CD8-positive, alpha-beta T cell (primary cell): ENCODE measurements at regions of chr1 and their contacts with region 1.

Region 1: GRCh38 chr1:155859234-155859829 is at the start of gene SYT11:
- DNase-seq: peak; percentile 79 to 97 (median 93)
- ATAC-seq: peak; percentile 85
- H3K4me3 ChIP-seq: peak within 1 kb of the TSS; percentile 61 to 64
- H3K4me3 Mint-ChIP-seq: peak within 1 kb of the TSS; percentile 83
- H3K27ac ChIP-seq: peak within 1 kb of the TSS; percentile 45 to 96
- H3K27ac Mint-ChIP-seq: peak within 1 kb of the TSS; percentile 90
- H3K4me1 ChIP-seq: peaks cover 37% of the 10 kb centered on the region
- H3K4me1 Mint-ChIP-seq: peaks cover 44% of the 10 kb centered on the region
- H3K27me3 ChIP-seq: no peaks in the 10 kb centered on the region
- H3K27me3 Mint-ChIP-seq: peaks cover 5% of the 10 kb centered on the region
- CTCF ChIP-seq: no peak
- total RNA-seq, gene SYT11: 6.9 to 8.6 TPM

Region 2: GRCh38 chr1:155261852-155262673 is 597.3 kb before region 1 on chr1 and contains the start of gene SCAMP3:
- CTCF ChIA-PET with region 1: no interaction called
- POLR2A ChIA-PET with region 1: no interaction called
- intact Hi-C with region 1: loop called in 1 of 2 experiments (anchors 5 kb)
- DNase-seq: peak; percentile 61 to 96 (median 84)
- ATAC-seq: peak; percentile 95
- H3K4me3 ChIP-seq: peak within 1 kb of the TSS; percentile 79 to 86
- H3K4me3 Mint-ChIP-seq: peak within 1 kb of the TSS; percentile 100
- H3K27ac ChIP-seq: peak within 1 kb of the TSS; percentile 72 to 85
- H3K27ac Mint-ChIP-seq: peak within 1 kb of the TSS; percentile 97
- H3K4me1 ChIP-seq: peaks cover 16% of the 10 kb centered on the region
- H3K4me1 Mint-ChIP-seq: peaks cover 29% of the 10 kb centered on the region
- H3K27me3 ChIP-seq: no peaks in the 10 kb centered on the region
- H3K27me3 Mint-ChIP-seq: no peaks in the 10 kb centered on the region
- CTCF ChIP-seq: no peak
- total RNA-seq, gene SCAMP3: 47.5 to 48.5 TPM

Region 3: GRCh38 chr1:155688324-155689080 is 170.8 kb before region 1 on chr1 and contains the start of gene YY1AP1:
- CTCF ChIA-PET with region 1: no interaction called
- POLR2A ChIA-PET with region 1: no interaction called
- intact Hi-C with region 1: loop called in 1 of 2 experiments (anchors 2 kb)
- DNase-seq: peak; percentile 82 to 95 (median 91)
- ATAC-seq: peak; percentile 86
- H3K4me3 ChIP-seq: peak within 1 kb of the TSS; percentile 91 to 97
- H3K4me3 Mint-ChIP-seq: peak within 1 kb of the TSS; percentile 96
- H3K27ac ChIP-seq: peak within 1 kb of the TSS; percentile 92 to 96
- H3K27ac Mint-ChIP-seq: peak within 1 kb of the TSS; percentile 97
- H3K4me1 ChIP-seq: peaks cover 46% of the 10 kb centered on the region
- H3K4me1 Mint-ChIP-seq: peaks cover 68% of the 10 kb centered on the region
- H3K27me3 ChIP-seq: no peaks in the 10 kb centered on the region
- H3K27me3 Mint-ChIP-seq: no peaks in the 10 kb centered on the region
- CTCF ChIP-seq: no peak
- total RNA-seq, gene YY1AP1: 122 to 138 TPM

Region 4: DNA sequence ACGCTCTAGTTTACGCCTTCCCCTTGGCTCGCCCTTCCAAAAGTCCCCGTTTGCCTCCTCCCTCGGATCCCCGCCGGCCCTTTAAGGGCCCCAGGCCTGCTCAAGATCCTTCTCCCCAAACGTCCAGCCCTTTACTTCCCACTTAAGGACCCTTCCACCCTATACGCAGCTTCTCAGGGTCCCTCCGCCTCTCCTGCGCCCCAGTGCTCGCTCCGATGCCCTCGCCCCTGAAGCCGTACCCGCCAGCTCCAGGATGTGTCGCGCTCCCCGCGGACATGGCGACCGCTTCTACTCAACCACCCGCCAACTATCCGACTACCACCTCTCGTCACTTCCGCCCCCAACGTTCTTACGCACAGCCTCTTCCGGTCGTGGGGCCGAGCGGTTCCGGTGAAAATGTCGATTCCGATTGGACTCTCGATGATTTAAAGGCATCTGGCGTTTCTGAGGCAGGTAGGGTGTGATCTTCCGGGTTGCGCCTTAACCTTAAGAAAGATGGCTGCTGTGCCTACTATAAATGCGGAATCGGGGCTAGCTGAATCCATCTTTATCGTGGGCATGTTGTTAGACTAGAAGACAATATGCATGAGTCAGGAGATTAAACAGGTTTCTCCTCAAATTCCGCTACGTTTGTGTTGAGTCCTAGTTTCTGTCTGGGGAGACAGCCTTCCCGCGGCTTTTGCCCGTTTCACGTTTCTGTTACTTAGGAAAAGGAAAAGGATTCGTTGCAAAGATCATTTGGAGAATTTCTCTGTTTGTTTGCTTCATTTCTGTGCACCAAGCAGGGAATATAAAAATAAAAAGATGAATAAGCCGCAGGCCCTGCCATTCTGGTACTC is 75.0 kb after region 1 on chr1 and contains the start of gene KHDC4:
- CTCF ChIA-PET with region 1: no interaction called
- POLR2A ChIA-PET with region 1: interaction called, 5 read pairs
- intact Hi-C with region 1: loop called (anchors 1 kb)
- DNase-seq: peak; percentile 88 to 100 (median 93)
- ATAC-seq: peak; percentile 92
- H3K4me3 ChIP-seq: peak within 1 kb of the TSS; percentile 83 to 96
- H3K4me3 Mint-ChIP-seq: no peak within 1 kb of the TSS
- H3K27ac ChIP-seq: peak within 1 kb of the TSS; percentile 89 to 98
- H3K27ac Mint-ChIP-seq: no peak within 1 kb of the TSS
- H3K4me1 ChIP-seq: peaks cover 39% of the 10 kb centered on the region
- H3K4me1 Mint-ChIP-seq: peaks cover 34% of the 10 kb centered on the region
- H3K27me3 ChIP-seq: no peaks in the 10 kb centered on the region
- H3K27me3 Mint-ChIP-seq: no peaks in the 10 kb centered on the region
- CTCF ChIP-seq: peak; percentile 32
- total RNA-seq, gene KHDC4: 47.4 to 54.6 TPM

Region 5: DNA sequence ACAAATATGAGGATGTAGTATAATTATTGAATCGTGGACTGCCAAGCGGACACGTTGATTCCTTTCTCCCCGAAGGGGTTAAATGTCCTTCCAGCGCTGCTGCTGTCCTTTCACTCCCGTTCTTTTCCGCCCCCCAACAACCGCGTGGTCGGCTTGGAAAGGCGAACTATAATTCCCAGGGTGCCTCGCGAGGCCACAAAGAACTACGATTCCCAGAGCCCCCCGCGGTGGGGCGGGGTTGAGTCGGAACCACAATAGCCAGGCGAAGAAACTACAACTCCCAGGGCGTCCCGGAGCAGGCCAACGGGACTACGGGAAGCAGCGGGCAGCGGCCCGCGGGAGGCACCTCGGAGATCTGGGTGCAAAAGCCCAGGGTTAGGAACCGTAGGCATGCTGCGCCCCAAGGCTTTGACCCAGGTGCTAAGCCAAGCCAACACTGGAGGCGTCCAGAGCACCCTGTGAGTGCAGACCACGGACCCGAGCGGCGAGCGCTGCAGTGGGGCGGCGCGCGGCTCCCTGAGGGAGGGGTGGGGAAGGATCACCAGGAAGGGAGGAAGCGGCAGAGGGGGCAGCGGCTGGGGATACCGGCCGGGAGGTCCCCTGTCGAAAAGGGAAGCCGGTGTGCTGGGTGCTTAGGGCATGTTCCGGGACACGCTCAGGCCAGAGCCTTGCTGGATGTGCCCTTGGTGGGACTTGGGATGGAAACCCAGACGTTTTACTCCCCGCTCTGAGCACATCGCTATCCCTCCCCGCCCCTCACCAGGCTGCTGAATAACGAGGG is 195.4 kb after region 1 on chr1 and contains the start of gene LAMTOR2:
- CTCF ChIA-PET with region 1: no interaction called
- POLR2A ChIA-PET with region 1: no interaction called
- intact Hi-C with region 1: loop called in 1 of 2 experiments (anchors 2 kb)
- DNase-seq: peak; percentile 90 to 98 (median 94)
- ATAC-seq: peak; percentile 78
- H3K4me3 ChIP-seq: peak within 1 kb of the TSS; percentile 85 to 96
- H3K4me3 Mint-ChIP-seq: peak within 1 kb of the TSS; percentile 92
- H3K27ac ChIP-seq: peak within 1 kb of the TSS; percentile 54 to 79
- H3K27ac Mint-ChIP-seq: peak within 1 kb of the TSS; percentile 84
- H3K4me1 ChIP-seq: peaks cover 11% of the 10 kb centered on the region
- H3K4me1 Mint-ChIP-seq: peaks cover 31% of the 10 kb centered on the region
- H3K27me3 ChIP-seq: no peaks in the 10 kb centered on the region
- H3K27me3 Mint-ChIP-seq: no peaks in the 10 kb centered on the region
- CTCF ChIP-seq: no peak
- total RNA-seq, gene LAMTOR2: 6.7 to 8.3 TPM